PC-9 (cell line): ENCODE measurements at regions of chr16 and their contacts with region 1.

Region 1: GRCh38 chr16:22665048-22665797 is 148.7 kb upstream of the HS3ST2 start:
- DNase-seq: no peak
- H3K4me3 ChIP-seq: no peak overlapping the region
- H3K27ac ChIP-seq: no peak overlapping the region
- H3K4me1 ChIP-seq: no peaks in the 10 kb centered on the region
- H3K27me3 ChIP-seq: no peaks in the 10 kb centered on the region
- CTCF ChIP-seq: no peak

Region 2: GRCh38 chr16:21590287-21590686 is 1074.9 kb before region 1 on chr16:
- CTCF ChIA-PET with region 1: interaction called, 17 read pairs
- POLR2A ChIA-PET with region 1: no interaction called
- intact Hi-C with region 1: no loop called
- DNase-seq: peak; percentile 14 to 94
- H3K4me3 ChIP-seq: peak overlapping the region; percentile 41; the same call in 1 of the 2 replicates
- H3K27ac ChIP-seq: peak overlapping the region; percentile 84
- H3K4me1 ChIP-seq: peaks cover 38% of the 10 kb centered on the region
- H3K27me3 ChIP-seq: no peaks in the 10 kb centered on the region
- CTCF ChIP-seq: no peak